Panc1 (cell line): ENCODE measurements at regions of chr12 and their contacts with region 1.

Region 1: DNA sequence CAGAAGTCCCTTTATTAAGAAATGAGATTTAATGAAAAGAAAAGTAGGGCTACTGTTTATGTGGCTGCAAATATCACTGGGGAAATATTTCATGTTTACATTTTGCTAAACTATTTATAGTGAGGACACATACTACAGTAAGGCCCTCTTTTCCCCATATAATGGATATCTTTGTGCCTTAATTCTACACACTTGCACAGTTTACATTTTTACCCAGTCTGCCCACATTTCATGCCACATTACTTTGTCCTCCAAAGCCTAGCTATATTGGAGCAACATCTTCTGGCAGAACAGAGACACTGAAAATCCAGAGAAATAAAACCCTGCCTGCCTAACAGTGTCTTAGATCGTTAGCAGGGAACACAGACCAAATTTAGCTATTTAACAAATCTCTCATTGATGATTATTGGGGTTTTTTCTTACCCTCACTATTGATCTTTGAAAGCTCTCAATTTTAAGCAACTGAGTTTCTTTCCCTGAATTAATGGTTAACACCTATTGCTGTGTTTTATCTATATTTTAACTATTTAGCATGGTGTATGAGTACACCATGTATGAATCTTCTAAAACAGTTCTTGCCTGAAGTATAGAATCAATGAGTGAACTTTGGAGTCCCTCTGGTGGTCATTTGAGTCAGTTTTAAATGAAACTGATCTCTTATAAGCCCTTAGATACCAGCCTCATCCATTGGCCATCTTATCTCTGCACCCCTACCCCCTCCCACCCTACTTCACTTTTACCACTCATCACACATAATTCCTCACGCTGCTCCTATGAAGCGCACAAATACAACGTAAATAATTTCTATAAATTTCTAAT is 170.2 kb downstream of the BCAT1 start:
- DNase-seq: peak; percentile 10
- ATAC-seq: peak; percentile 73; the same call in 1 of the 2 replicates
- H3K4me3 ChIP-seq: no peak overlapping the region
- H3K27ac ChIP-seq: no peak overlapping the region
- H3K4me1 ChIP-seq: no peaks in the 10 kb centered on the region
- H3K27me3 ChIP-seq: peaks cover 3% of the 10 kb centered on the region; the same call in 1 of the 2 replicates
- CTCF ChIP-seq: peak; percentile 66

Region 2: GRCh38 chr12:24517000-24517399 is 261.7 kb before region 1 on chr12:
- CTCF ChIA-PET with region 1: interaction called, 12 read pairs
- POLR2A ChIA-PET with region 1: no interaction called
- in situ Hi-C with region 1: no loop called
- intact Hi-C with region 1: no loop called
- DNase-seq: no peak
- ATAC-seq: no peak
- H3K4me3 ChIP-seq: no peak overlapping the region
- H3K27ac ChIP-seq: no peak overlapping the region
- H3K4me1 ChIP-seq: no peaks in the 10 kb centered on the region
- H3K27me3 ChIP-seq: no peaks in the 10 kb centered on the region
- CTCF ChIP-seq: no peak

Region 3: DNA sequence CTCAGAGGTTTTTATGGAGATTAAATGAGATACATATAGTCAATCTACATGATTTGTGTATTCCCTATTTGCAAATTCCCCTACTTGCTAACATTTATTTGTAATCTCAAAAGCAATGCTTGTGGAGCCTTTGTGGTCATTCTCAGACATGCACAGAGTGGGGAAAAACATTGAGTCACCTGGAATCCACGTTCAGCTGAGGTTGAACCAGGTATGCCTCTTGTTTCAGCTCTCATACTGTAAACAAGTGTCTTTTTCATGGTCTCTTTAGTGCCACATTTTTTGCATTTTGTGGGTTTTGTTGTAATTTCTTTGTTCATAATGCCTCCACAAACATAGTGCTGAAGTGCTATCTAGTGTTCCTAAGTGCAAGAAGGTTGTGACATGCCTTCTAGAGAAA is 11.7 kb before region 1 on chr12:
- CTCF ChIA-PET with region 1: interaction called, 10 read pairs
- POLR2A ChIA-PET with region 1: no interaction called
- in situ Hi-C with region 1: no loop called
- intact Hi-C with region 1: no loop called
- DNase-seq: no peak
- ATAC-seq: no peak
- H3K4me3 ChIP-seq: no peak overlapping the region
- H3K27ac ChIP-seq: no peak overlapping the region
- H3K4me1 ChIP-seq: no peaks in the 10 kb centered on the region
- H3K27me3 ChIP-seq: no peaks in the 10 kb centered on the region
- CTCF ChIP-seq: no peak

Region 4: GRCh38 chr12:25447046-25447445 is 668.4 kb after region 1 on chr12:
- CTCF ChIA-PET with region 1: no interaction called
- POLR2A ChIA-PET with region 1: no interaction called
- in situ Hi-C with region 1: no loop called
- intact Hi-C with region 1: no loop called
- DNase-seq: no peak
- ATAC-seq: no peak
- H3K4me3 ChIP-seq: no peak overlapping the region
- H3K27ac ChIP-seq: no peak overlapping the region
- H3K4me1 ChIP-seq: no peaks in the 10 kb centered on the region
- H3K27me3 ChIP-seq: no peaks in the 10 kb centered on the region
- CTCF ChIP-seq: no peak